Endothelial cell of umbilical vein (primary cell): ENCODE measurements at regions of chr17 and their contacts with region 1.

Region 1: DNA sequence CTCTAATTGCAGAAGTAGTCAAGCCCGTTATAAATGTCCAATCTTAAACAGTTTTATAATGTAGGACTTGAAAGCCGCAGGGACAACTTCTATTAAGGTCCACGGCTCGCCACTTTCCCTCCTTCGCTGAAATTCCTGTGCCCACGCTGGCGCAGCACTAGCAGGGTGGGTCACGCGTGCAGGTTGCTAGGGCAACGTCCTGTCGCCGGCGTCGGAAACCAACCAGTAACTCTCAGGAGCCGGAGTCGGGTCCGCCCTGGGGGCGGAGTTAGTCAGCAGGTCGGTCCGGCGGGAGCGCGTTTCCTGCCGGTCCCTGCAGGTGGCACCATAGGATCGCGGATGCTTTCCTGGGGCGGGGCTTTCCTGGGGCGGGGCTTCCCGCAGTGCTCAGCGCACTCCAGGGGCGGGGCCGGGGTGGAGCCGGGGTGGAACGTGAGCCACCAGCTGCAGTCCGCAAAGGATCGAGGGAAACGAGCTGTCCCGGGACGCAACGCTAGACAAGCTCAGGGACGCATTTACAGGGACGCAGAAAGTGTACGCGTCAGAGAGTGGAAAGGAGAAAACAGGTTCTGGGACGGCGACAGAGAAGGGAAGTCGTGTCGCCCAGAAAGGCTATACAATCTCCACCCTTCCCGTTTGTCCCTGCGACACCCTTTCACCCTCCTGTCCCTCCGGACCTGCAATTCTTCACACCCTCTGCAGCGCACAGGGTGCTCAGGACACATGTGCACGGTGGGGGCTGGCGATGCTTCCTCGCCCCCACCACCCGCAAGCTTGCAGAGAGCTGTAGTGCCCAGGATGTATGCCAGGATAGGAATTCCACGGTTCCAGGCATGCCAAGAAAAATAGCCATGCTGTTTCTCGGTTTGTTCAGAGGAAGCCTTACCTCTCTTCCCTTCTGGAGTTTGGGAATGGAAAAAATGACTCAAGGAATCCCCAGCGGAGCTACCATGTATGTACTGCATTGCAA is 12.4 kb downstream of the COPZ2 start:
- DNase-seq: peak; percentile 97
- H3K4me3 ChIP-seq: peak overlapping the region; percentile 5 to 55 (median 39)
- H3K27ac ChIP-seq: no peak overlapping the region
- H3K4me1 ChIP-seq: peaks cover 26% of the 10 kb centered on the region
- H3K27me3 ChIP-seq: no peaks in the 10 kb centered on the region
- CTCF ChIP-seq: peak; percentile 73 to 90
- POLR2A ChIP-seq: no peak

Region 2: DNA sequence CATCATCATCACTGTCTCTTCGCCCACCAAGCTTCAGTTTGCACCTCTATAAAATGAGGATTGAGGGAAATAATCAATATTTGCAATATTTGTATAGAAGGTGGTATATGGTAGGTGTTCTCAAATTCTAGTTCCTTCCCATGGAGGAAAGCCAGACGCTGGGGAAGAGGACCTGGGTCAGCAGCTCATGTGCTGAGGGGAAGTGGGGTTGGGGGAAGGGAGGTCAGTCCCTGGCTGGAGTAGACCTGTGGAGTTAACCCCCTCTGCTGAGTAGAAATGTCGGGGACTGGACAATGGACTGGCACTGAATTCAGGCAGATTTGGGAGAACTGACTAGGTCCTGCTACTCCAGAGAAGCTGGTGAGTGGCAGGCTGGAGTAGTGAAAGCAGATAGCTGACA is 784.4 kb before region 1 on chr17:
- CTCF ChIA-PET with region 1: no interaction called
- POLR2A ChIA-PET with region 1: no interaction called
- dilution Hi-C with region 1: no loop called
- intact Hi-C with region 1: no loop called
- DNase-seq: peak; percentile 36
- H3K4me3 ChIP-seq: no peak overlapping the region
- H3K27ac ChIP-seq: peak overlapping the region; percentile 100
- H3K4me1 ChIP-seq: peaks cover 24% of the 10 kb centered on the region
- H3K27me3 ChIP-seq: no peaks in the 10 kb centered on the region
- CTCF ChIP-seq: no peak
- POLR2A ChIP-seq: no peak

Region 3: GRCh38 chr17:48037036-48037837 is 12.0 kb after region 1 on chr17 and contains the start of gene COPZ2:
- CTCF ChIA-PET with region 1: interaction called, 34 read pairs
- POLR2A ChIA-PET with region 1: no interaction called
- dilution Hi-C with region 1: no loop called
- intact Hi-C with region 1: no loop called
- DNase-seq: peak; percentile 51
- H3K4me3 ChIP-seq: peak within 1 kb of the TSS; percentile 52 to 60 (median 57)
- H3K27ac ChIP-seq: peak within 1 kb of the TSS; percentile 4
- H3K4me1 ChIP-seq: peaks cover 7% of the 10 kb centered on the region
- H3K27me3 ChIP-seq: no peaks in the 10 kb centered on the region
- CTCF ChIP-seq: peak; percentile 48 to 72
- POLR2A ChIP-seq: no peak
- total RNA-seq, gene COPZ2: 12.5 and 16.3 TPM in 2 replicates

Region 4: GRCh38 chr17:48062273-48062672 is 37.1 kb after region 1 on chr17:
- CTCF ChIA-PET with region 1: interaction called, 79 read pairs
- POLR2A ChIA-PET with region 1: no interaction called
- dilution Hi-C with region 1: no loop called
- intact Hi-C with region 1: no loop called
- DNase-seq: no peak
- H3K4me3 ChIP-seq: no peak overlapping the region
- H3K27ac ChIP-seq: no peak overlapping the region
- H3K4me1 ChIP-seq: peaks cover 19% of the 10 kb centered on the region
- H3K27me3 ChIP-seq: no peaks in the 10 kb centered on the region
- CTCF ChIP-seq: no peak
- POLR2A ChIP-seq: no peak

Region 5: GRCh38 chr17:48095611-48096010 is 70.4 kb after region 1 on chr17:
- CTCF ChIA-PET with region 1: interaction called, 44 read pairs
- POLR2A ChIA-PET with region 1: interaction called, 3 read pairs
- dilution Hi-C with region 1: no loop called
- intact Hi-C with region 1: loop called (anchors 2 kb)
- DNase-seq: no peak
- H3K4me3 ChIP-seq: no peak overlapping the region
- H3K27ac ChIP-seq: no peak overlapping the region
- H3K4me1 ChIP-seq: peaks cover 8% of the 10 kb centered on the region
- H3K27me3 ChIP-seq: no peaks in the 10 kb centered on the region
- CTCF ChIP-seq: no peak
- POLR2A ChIP-seq: no peak

Region 6: DNA sequence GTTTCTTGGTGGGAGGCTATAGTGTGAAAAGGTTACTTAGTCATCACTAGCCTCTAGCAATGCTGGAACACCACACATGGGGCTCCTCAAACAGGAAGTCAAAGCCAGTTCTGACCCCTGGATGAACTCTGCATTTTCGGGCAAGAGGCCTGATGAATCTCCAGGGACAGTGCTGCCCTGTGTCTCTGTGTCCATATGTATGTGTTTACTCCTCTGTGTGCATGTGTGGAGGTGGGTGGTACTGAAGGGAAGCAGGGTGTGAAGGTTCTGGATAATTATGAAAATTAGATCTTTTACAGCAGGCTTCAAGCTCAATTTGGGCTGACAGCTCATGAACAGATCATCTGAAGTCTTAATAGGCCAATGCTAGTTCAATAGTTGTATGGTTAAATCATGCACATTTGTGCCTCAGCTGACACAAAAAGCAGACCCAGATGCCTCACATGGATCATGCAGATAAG is 215.9 kb after region 1 on chr17:
- CTCF ChIA-PET with region 1: no interaction called
- POLR2A ChIA-PET with region 1: no interaction called
- dilution Hi-C with region 1: no loop called
- intact Hi-C with region 1: loop called (anchors 10 kb)
- DNase-seq: peak; percentile 73
- H3K4me3 ChIP-seq: no peak overlapping the region
- H3K27ac ChIP-seq: peak overlapping the region; percentile 90
- H3K4me1 ChIP-seq: peaks cover 92% of the 10 kb centered on the region
- H3K27me3 ChIP-seq: no peaks in the 10 kb centered on the region
- CTCF ChIP-seq: no peak
- POLR2A ChIP-seq: peak; percentile 14

Region 7: GRCh38 chr17:48618256-48618897 is 593.2 kb after region 1 on chr17:
- CTCF ChIA-PET with region 1: interaction called, 16 read pairs
- POLR2A ChIA-PET with region 1: no interaction called
- dilution Hi-C with region 1: no loop called
- intact Hi-C with region 1: loop called (anchors 1 kb)
- DNase-seq: peak; percentile 83
- H3K4me3 ChIP-seq: peak overlapping the region; percentile 3 to 46 (median 30)
- H3K27ac ChIP-seq: no peak overlapping the region
- H3K4me1 ChIP-seq: peaks cover 27% of the 10 kb centered on the region
- H3K27me3 ChIP-seq: peaks cover 66 to 79% of the 10 kb centered on the region in 2 experiments
- CTCF ChIP-seq: peak; percentile 91 to 99
- POLR2A ChIP-seq: no peak